ENCODE measurements at regions of chr4 and their contacts with region 1.

Region 1: DNA sequence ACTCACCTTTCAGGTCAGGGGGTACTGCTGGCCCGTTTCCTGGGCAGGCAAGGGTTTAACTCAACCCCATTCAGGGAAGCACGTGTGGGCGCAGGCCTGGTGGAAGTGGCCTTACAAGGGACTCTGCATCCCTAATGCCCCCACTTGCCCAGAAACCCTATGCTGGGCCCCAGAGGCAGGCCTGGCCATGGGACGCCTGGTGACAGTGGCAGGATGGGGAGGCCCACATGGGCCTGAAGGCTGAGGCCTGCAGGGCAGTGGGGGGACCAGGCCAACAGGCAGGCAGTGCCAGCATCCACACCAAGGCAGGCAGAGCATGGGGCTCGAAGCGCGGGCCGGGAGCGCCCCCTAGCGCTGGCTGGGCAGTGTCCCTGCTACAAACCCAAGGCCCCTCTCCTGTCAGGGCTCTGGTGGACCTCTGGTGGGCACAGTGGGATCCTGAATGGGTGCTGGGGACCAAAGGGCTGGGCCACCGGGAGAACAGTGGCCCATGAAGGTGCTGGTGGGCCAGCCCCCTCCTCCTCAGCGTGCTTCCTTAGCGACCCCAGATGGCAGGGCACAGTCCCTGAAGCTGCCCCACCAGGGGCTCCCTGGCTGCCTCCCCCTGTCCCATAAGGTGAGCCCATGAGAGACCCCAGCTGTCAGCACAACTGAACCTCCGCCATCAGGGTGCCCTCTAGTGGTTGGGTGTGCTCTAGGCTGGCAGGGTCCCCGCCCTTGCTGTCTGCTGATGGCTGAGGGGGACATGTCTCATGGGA is 16.8 kb downstream of the FGFR3 start:
- DNase-seq: peak in 1 of 2 donors; percentile 93
- H3K4me3 ChIP-seq: no peak overlapping the region
- CTCF ChIP-seq: peak in 1 of 3 donors; percentile 33
- POLR2A ChIP-seq: no peak

Region 2: GRCh38 chr4:1746265-1746691 is 63.7 kb before region 1 on chr4:
- intact Hi-C with region 1: loop called (anchors 2 kb)
- DNase-seq: peak in 1 of 2 donors; percentile 93
- H3K4me3 ChIP-seq: no peak overlapping the region
- CTCF ChIP-seq: peak in 1 of 3 donors; percentile 12
- POLR2A ChIP-seq: no peak

Region 3: DNA sequence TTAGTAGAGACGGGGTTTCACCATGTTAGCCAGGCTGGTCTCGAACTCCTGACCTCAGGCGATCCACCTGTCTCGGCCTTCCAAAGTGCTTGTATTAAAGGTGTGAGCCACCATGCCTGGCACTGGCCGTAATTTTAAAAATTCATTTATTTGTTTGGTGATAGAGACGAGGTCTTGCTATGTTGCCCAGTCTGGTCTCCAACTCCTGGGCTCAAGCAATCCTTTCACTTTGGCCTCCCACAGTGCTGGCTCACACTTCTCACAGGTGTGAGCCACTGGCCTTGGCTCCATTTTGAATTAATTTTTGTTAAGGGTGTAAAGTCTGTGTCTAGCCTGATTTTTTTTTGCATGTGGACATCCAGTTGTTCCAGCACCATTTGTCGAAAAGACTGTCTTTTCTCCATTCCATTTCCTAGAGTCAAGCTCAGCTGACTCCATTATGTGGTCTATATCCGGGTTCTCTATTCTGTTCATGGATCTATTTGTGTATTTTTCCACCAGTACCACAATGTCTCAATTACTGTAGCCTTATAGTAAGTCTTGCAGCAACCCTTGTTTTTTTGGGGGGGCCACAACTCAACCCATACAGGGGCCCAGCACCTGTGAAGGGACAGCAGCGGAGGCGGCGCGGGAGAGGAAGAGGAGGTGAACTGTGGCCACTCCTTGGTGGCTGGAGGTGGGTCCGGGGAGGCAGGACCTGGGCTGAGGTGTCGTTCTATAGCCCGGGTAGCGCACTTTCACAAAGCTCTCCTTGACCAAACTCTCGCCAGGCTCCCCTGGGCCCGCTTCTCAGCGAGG is 59.8 kb after region 1 on chr4:
- intact Hi-C with region 1: no loop called
- DNase-seq: no peak
- H3K4me3 ChIP-seq: peak overlapping the region; percentile 57
- CTCF ChIP-seq: no peak
- POLR2A ChIP-seq: no peak

Measured in lower leg skin (tissue), 4 donors.